ENCODE measurements at regions of chr10 and their contacts with region 1.

Region 1: GRCh38 chr10:47024399-47025252 is 113.4 kb downstream of the PTPN20 start:
- DNase-seq: peak; percentile 82
- ATAC-seq: peak; percentile 93
- H3K4me3 Mint-ChIP-seq: no peak overlapping the region
- H3K27ac Mint-ChIP-seq: no peak overlapping the region
- H3K4me1 Mint-ChIP-seq: peaks cover 2% of the 10 kb centered on the region
- H3K27me3 Mint-ChIP-seq: no peaks in the 10 kb centered on the region
- CTCF ChIP-seq: peak; percentile 86

Region 2: DNA sequence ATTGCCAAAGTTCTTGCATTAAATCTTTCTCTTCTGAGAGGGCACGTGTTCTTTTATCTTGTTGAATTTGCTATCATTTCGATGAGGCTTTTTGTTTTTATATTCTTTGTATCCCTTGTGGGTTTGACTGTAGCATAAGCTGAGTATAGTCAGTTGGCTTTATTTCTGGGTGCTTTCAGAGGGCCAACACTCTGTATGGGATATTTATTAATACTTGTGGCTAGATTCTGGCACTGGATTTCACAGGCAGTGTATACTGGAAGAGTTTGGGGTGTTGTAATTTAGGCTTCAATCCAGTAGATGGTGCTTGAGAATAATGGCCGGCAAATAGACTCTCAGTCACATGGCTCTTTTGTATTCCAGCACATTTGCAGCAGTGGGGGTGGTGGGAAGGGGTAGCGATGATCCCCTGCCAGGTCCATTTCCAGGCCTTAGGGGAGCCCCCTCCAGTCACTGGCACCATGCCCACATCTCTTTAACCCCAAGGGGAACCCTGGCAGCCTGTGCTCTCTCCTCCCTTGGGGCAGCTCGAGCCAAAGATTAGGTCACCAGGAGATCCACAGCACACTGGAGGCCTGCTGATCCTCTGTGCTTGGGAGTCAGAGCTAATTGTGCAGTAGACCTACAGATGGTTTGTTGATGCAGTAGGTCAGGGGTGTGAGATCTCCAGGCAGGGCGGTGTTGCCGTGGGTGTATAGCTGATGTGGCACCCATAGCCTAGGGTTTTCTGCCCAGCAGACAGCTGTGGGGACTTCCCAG is 31.6 kb before region 1 on chr10:
- CTCF ChIA-PET with region 1: interaction called, 10 read pairs
- POLR2A ChIA-PET with region 1: no interaction called
- intact Hi-C with region 1: no loop called
- DNase-seq: no peak
- ATAC-seq: no peak
- H3K4me3 Mint-ChIP-seq: no peak overlapping the region
- H3K27ac Mint-ChIP-seq: no peak overlapping the region
- H3K4me1 Mint-ChIP-seq: no peaks in the 10 kb centered on the region
- H3K27me3 Mint-ChIP-seq: peaks cover 3% of the 10 kb centered on the region
- CTCF ChIP-seq: no peak

Region 3: GRCh38 chr10:47013507-47014154 is 11.0 kb before region 1 on chr10:
- CTCF ChIA-PET with region 1: interaction called, 12 read pairs
- POLR2A ChIA-PET with region 1: interaction called, 5 read pairs
- intact Hi-C with region 1: no loop called
- DNase-seq: no peak
- ATAC-seq: no peak
- H3K4me3 Mint-ChIP-seq: no peak overlapping the region
- H3K27ac Mint-ChIP-seq: no peak overlapping the region
- H3K4me1 Mint-ChIP-seq: no peaks in the 10 kb centered on the region
- H3K27me3 Mint-ChIP-seq: peaks cover 3% of the 10 kb centered on the region
- CTCF ChIP-seq: no peak

Region 4: GRCh38 chr10:47038851-47039561 is 14.4 kb after region 1 on chr10:
- CTCF ChIA-PET with region 1: interaction called, 18 read pairs
- POLR2A ChIA-PET with region 1: no interaction called
- intact Hi-C with region 1: no loop called
- DNase-seq: no peak
- ATAC-seq: no peak
- H3K4me3 Mint-ChIP-seq: no peak overlapping the region
- H3K27ac Mint-ChIP-seq: no peak overlapping the region
- H3K4me1 Mint-ChIP-seq: no peaks in the 10 kb centered on the region
- H3K27me3 Mint-ChIP-seq: no peaks in the 10 kb centered on the region
- CTCF ChIP-seq: no peak

Region 5: DNA sequence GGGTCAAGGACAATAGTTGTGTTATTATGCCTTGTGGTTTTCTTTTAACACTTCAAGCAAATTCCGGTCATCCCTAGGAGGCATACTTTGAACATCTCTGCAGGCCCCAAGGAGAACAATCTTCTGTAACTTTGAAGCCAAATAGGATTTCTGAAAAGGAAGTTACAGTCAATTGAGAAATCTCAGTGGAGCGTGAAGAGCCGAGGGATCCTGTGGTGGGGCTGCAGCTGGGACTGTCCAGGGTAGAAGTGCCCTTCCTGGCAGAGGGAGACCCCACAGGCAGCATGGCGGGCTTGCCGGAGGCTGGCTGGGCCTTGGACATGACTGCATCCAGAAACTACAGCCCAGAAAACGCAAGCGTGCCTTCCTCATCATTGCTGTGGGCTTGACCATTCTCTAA is 66.3 kb after region 1 on chr10:
- CTCF ChIA-PET with region 1: no interaction called
- POLR2A ChIA-PET with region 1: no interaction called
- intact Hi-C with region 1: no loop called
- DNase-seq: no peak
- ATAC-seq: no peak
- H3K4me3 Mint-ChIP-seq: no peak overlapping the region
- H3K27ac Mint-ChIP-seq: no peak overlapping the region
- H3K4me1 Mint-ChIP-seq: peaks cover 13% of the 10 kb centered on the region
- H3K27me3 Mint-ChIP-seq: no peaks in the 10 kb centered on the region
- CTCF ChIP-seq: no peak

Region 6: GRCh38 chr10:47317251-47317650 is 292.6 kb after region 1 on chr10:
- CTCF ChIA-PET with region 1: interaction called, 56 read pairs
- POLR2A ChIA-PET with region 1: no interaction called
- intact Hi-C with region 1: loop called (anchors 2 kb)
- DNase-seq: no peak
- ATAC-seq: no peak
- H3K4me3 Mint-ChIP-seq: no peak overlapping the region
- H3K27ac Mint-ChIP-seq: no peak overlapping the region
- H3K4me1 Mint-ChIP-seq: peaks cover under 1% of the 10 kb centered on the region
- H3K27me3 Mint-ChIP-seq: no peaks in the 10 kb centered on the region
- CTCF ChIP-seq: no peak

Region 7: DNA sequence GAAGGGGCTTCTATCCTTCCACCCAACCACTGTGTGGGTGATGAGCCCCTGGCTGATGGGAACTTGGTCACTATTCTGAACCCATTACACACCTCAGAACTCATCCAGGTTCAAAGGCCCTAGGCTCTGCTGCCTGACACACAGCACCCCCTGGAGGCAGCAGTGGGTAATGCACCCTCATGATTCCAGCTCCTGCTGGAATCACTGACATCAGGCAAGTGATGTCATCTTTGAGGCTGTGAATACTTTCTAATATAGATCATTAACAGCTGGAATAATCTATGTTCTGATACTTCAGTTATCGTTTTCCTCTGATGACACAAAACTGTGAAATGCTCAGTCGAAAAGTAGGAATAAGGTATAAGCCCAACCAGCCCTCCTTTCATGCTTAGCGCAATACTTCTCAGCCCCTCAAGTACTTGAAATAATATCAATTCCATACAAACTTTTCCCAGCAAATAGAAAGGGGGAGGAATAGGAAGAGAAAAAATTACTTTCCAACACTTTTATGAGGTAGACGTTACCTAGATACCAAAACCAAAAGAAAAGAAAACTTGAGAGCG is 316.1 kb after region 1 on chr10:
- CTCF ChIA-PET with region 1: interaction called, 14 read pairs
- POLR2A ChIA-PET with region 1: no interaction called
- intact Hi-C with region 1: loop called (anchors 1 kb)
- DNase-seq: peak; percentile 81
- ATAC-seq: peak; percentile 83
- H3K4me3 Mint-ChIP-seq: no peak overlapping the region
- H3K27ac Mint-ChIP-seq: no peak overlapping the region
- H3K4me1 Mint-ChIP-seq: no peaks in the 10 kb centered on the region
- H3K27me3 Mint-ChIP-seq: peaks cover 1% of the 10 kb centered on the region
- CTCF ChIP-seq: peak; percentile 99

Region 8: DNA sequence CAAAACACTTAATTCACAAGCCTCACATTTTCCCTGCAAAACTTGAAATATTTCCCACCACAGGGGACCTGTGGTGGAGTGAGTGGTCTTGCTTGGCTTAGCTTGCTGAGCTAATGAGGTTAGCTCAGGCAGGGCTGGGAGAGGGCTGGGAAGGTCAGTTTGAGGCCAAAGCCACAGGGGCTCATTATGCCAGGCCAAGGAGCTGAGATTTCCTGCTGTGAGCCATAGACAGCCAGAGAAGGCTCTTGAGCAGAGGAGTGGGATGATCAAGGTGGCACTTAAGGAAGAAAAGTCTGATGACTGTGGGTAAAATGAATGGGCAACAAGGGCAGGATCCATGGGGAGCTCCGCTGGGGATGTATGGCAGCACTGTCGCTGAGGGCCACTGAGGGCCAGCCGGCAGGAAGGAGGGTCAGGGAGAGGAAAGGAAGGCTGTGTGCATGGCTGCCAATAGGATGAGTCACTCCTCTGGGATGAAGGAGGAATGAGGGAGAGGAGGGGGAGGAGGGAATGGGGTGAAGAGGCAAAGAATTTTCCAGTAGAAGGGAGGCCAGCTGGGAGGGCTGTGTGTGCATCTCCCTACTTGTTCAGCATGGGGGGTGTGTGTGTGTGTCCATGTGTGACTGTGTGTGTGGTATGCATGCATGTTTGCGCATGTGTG is 378.1 kb after region 1 on chr10:
- CTCF ChIA-PET with region 1: no interaction called
- POLR2A ChIA-PET with region 1: no interaction called
- intact Hi-C with region 1: no loop called
- DNase-seq: no peak
- ATAC-seq: no peak
- H3K4me3 Mint-ChIP-seq: no peak overlapping the region
- H3K27ac Mint-ChIP-seq: no peak overlapping the region
- H3K4me1 Mint-ChIP-seq: no peaks in the 10 kb centered on the region
- H3K27me3 Mint-ChIP-seq: peaks cover 7% of the 10 kb centered on the region
- CTCF ChIP-seq: no peak

Measured in activated CD8-positive, alpha-beta T cell treated with anti-CD3 and anti-CD28 coated beads for 36 hours (primary cell).